Activated CD8-positive, alpha-beta T cell treated with anti-CD3 and anti-CD28 coated beads for 36 hours (primary cell): ENCODE measurements at regions of chr5 and their contacts with region 1.

Region 1: DNA sequence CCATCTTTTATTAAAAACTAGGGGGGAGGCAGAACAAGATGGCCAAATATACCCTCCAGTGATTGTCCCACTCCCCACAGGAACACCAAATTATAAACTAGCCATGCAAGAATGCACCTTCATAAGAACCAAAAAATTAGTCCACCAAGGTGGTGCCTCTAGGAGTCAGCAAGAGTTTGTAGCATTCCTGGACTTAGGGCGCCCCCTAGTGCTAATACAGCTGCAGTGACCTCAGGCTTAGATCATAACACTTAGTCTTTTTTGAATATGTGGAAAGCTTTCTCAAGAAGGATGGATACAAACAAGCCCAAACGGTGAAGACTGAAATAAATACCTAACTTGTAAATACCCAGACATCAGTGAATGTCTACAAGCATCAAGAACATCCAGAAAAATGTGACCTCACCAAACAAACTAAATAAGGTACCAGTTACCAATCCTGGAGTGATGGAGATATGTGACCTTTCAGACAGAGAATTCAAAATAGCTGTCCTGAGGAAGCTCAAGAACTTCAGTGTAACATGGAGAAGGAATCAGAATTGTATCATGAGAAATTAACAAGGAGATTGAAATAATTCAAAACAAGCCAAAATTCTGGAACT is 19.3 kb downstream of the PPIP5K2 start:
- DNase-seq: peak; percentile 91
- ATAC-seq: peak; percentile 94
- H3K4me3 Mint-ChIP-seq: no peak overlapping the region
- H3K27ac Mint-ChIP-seq: no peak overlapping the region
- H3K4me1 Mint-ChIP-seq: peaks cover 5% of the 10 kb centered on the region
- H3K27me3 Mint-ChIP-seq: no peaks in the 10 kb centered on the region
- CTCF ChIP-seq: peak; percentile 86

Region 2: GRCh38 chr5:102589661-102590060 is 549.7 kb before region 1 on chr5:
- CTCF ChIA-PET with region 1: no interaction called
- POLR2A ChIA-PET with region 1: no interaction called
- intact Hi-C with region 1: loop called (anchors 5 kb)
- DNase-seq: no peak
- ATAC-seq: no peak
- H3K4me3 Mint-ChIP-seq: no peak overlapping the region
- H3K27ac Mint-ChIP-seq: no peak overlapping the region
- H3K4me1 Mint-ChIP-seq: peaks cover 11% of the 10 kb centered on the region
- H3K27me3 Mint-ChIP-seq: peaks cover 2% of the 10 kb centered on the region
- CTCF ChIP-seq: no peak

Region 3: DNA sequence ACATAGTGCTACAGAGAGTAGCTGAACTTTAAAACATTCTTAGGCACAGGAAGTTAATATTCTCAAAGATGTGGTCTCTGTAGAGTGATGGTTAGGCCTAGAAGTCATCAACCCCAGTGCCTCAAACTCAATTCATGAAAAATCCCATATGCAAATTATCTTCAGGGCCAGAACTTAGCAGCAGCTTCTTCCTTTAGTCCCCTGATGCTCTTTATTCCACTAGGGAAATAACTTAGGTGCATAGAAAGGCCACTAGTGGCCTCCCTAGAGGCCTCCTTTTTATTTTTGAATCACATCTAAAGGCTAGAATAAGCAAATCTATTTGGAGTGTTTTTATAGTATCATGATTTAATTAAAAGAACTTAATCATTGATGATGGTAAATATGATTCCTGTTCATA is 107.8 kb before region 1 on chr5:
- CTCF ChIA-PET with region 1: interaction called, 8 read pairs
- POLR2A ChIA-PET with region 1: no interaction called
- intact Hi-C with region 1: loop called (anchors 10 kb)
- DNase-seq: no peak
- ATAC-seq: no peak
- H3K4me3 Mint-ChIP-seq: no peak overlapping the region
- H3K27ac Mint-ChIP-seq: no peak overlapping the region
- H3K4me1 Mint-ChIP-seq: peaks cover 3% of the 10 kb centered on the region
- H3K27me3 Mint-ChIP-seq: peaks cover 2% of the 10 kb centered on the region
- CTCF ChIP-seq: peak; percentile 39

Region 4: GRCh38 chr5:103126557-103126956 is 12.8 kb before region 1 on chr5:
- CTCF ChIA-PET with region 1: interaction called, 33 read pairs
- POLR2A ChIA-PET with region 1: no interaction called
- intact Hi-C with region 1: no loop called
- DNase-seq: no peak
- ATAC-seq: no peak
- H3K4me3 Mint-ChIP-seq: no peak overlapping the region
- H3K27ac Mint-ChIP-seq: no peak overlapping the region
- H3K4me1 Mint-ChIP-seq: peaks cover 36% of the 10 kb centered on the region
- H3K27me3 Mint-ChIP-seq: no peaks in the 10 kb centered on the region
- CTCF ChIP-seq: no peak